Prostate gland (tissue), 2 donors: ENCODE measurements at regions of chr12 and their contacts with region 1.

Region 1: DNA sequence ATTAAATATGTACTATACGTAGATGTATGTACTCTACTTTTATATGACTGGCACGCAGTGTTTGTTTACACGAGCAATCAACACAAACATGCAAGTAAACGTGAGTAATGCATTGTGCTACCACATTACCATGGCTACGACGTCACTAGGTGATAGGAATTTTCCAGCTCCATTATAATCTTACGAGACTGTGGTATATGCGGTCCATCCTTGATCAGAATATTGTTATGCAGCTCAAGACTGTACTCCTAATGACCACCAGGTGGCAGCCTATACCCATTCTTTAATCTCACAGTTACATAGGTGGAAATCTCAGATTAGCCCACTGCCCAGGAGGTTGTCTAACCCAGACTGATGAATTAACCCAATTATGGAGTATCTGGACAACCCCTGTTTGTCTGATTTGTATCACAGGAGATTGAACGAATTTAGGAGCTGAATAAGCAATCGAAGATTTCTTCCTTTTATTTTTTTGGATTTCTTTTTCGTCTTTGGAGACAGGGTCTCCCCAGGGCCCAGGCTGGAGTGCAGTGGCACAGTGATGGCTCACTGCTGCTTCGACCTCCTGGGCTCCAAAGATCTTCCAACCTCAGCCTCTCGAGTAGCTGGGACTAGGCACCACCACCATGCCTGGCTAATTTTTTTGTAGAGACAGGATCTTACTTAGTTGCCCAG is 8.7 kb upstream of the TESPA1 start:
- DNase-seq: peak; percentile 55
- H3K4me3 ChIP-seq: no peak overlapping the region
- H3K27ac ChIP-seq: no peak overlapping the region
- H3K4me1 ChIP-seq: no peaks in the 10 kb centered on the region
- H3K27me3 ChIP-seq: no peaks in the 10 kb centered on the region
- CTCF ChIP-seq: peak; percentile 77 to 92 (median 82)
- POLR2A ChIP-seq: no peak

Region 2: GRCh38 chr12:55073043-55074022 is 80.0 kb after region 1 on chr12:
- intact Hi-C with region 1: loop called (anchors 1 kb)
- DNase-seq: peak; percentile 50
- H3K4me3 ChIP-seq: no peak overlapping the region
- H3K27ac ChIP-seq: no peak overlapping the region
- H3K4me1 ChIP-seq: no peaks in the 10 kb centered on the region
- H3K27me3 ChIP-seq: no peaks in the 10 kb centered on the region
- CTCF ChIP-seq: peak; percentile 66 to 87 (median 72)
- POLR2A ChIP-seq: no peak